Endothelial cell of umbilical vein (primary cell): ENCODE measurements at regions of chr3 and their contacts with region 1.

Region 1: DNA sequence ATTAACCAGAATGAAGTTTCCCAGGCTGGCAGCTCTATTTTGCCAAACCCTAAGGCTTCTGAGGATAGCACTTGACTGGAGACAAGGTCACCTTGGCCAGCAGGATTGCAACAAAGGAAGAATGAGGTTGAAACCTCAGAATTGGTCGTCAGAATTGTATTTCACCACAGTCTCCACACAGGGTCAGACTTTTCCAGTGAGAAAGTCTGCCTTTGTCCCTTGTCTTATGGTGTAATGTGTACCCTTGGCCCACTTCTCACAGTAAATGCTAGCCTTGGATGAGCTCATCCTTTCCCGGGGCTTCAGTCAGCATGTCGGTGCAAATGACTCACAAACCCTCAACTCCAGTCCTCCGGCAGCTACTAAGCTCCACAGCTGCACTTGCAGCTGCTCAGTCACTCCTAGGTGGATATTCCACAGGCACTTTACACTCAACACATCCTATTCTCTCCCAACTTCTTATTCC is 19.7 kb downstream of the SSR3 start:
- DNase-seq: peak; percentile 94
- H3K4me3 ChIP-seq: no peak overlapping the region
- H3K27ac ChIP-seq: peak overlapping the region; percentile 55
- H3K4me1 ChIP-seq: peaks cover 7% of the 10 kb centered on the region
- H3K27me3 ChIP-seq: no peaks in the 10 kb centered on the region
- CTCF ChIP-seq: peak in 1 of 2 donors; percentile 22
- POLR2A ChIP-seq: peak; percentile 58

Region 2: GRCh38 chr3:156547637-156548036 is 12.4 kb after region 1 on chr3:
- CTCF ChIA-PET with region 1: interaction called, 13 read pairs
- POLR2A ChIA-PET with region 1: interaction called, 4 read pairs
- dilution Hi-C with region 1: no loop called
- intact Hi-C with region 1: no loop called
- DNase-seq: peak; percentile 51
- H3K4me3 ChIP-seq: no peak overlapping the region
- H3K27ac ChIP-seq: peak overlapping the region; percentile 42
- H3K4me1 ChIP-seq: peaks cover 93% of the 10 kb centered on the region
- H3K27me3 ChIP-seq: no peaks in the 10 kb centered on the region
- CTCF ChIP-seq: no peak
- POLR2A ChIP-seq: no peak